ENCODE measurements at regions of chr17 and their contacts with region 1.

Region 1: DNA sequence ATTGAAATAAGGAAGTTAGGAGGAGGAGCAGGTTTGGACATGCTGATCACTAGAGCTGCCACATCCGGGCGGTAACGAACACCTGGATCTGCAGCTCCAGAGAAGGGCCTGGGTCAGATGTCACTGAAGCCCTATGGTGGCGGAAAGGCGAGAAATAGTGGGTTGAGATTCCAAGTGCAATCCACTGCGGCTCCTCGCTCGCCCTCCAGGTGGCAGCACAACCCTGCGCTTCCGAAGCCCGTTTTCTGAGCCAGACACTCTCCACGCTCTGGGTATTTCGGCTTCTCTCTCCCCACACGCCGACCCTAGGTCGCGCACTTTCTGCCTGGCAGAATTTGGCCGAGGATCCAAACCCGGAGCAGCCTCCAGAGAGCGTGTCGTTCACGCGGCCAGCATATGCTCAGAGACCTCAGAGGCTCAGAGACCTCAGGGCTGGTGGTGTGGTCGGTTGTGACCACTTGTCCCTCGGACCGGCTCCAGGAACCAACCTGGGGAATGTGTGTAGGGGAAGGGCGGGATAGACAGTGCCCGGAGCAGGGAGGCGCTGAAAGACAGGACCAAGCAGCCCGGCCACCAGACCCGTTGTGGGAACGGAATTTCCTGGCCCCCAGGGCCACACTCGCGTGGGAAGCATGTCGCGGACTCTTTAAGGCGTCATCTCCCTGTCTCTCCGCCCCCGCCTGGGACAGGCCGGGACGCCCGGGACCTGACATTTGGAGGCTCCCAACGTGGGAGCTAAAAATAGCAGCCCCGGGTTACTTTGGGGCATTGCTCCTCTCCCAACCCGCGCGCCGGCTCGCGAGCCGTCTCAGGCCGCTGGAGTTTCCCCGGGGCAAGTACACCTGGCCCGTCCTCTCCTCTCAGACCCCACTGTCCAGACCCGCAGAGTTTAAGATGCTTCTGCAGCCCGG is 744 bp upstream of the SLC2A4 start:
- H3K4me3 Mint-ChIP-seq: peak overlapping the region; percentile 73
- H3K27ac Mint-ChIP-seq: peak overlapping the region; percentile 46
- H3K4me1 Mint-ChIP-seq: peaks cover 47% of the 10 kb centered on the region
- H3K27me3 Mint-ChIP-seq: peaks cover 76% of the 10 kb centered on the region

Region 2: DNA sequence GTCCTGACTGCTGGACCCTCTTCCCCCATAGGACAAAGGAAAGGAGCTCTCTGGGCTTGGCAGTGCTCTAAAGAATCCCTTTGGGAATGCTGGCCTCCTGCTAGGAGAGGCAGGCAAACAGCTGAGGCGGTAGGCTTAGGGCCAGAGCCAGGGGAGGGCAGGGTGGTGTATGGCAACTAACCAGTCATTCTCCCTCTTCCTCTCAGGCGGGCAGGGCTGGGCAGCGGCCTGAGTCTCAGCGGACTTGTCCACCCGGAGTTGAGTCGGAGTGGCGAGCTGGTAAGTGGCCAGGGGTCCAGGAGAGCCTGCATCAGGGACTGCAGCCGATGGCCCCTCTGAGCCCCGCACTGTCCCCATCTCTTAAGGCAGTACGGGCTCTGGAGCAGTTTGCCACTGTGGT is 56.7 kb before region 1 on chr17:
- intact Hi-C with region 1: no loop called
- H3K4me3 Mint-ChIP-seq: no peak overlapping the region
- H3K27ac Mint-ChIP-seq: no peak overlapping the region
- H3K4me1 Mint-ChIP-seq: peaks cover 30% of the 10 kb centered on the region
- H3K27me3 Mint-ChIP-seq: no peaks in the 10 kb centered on the region

Region 3: DNA sequence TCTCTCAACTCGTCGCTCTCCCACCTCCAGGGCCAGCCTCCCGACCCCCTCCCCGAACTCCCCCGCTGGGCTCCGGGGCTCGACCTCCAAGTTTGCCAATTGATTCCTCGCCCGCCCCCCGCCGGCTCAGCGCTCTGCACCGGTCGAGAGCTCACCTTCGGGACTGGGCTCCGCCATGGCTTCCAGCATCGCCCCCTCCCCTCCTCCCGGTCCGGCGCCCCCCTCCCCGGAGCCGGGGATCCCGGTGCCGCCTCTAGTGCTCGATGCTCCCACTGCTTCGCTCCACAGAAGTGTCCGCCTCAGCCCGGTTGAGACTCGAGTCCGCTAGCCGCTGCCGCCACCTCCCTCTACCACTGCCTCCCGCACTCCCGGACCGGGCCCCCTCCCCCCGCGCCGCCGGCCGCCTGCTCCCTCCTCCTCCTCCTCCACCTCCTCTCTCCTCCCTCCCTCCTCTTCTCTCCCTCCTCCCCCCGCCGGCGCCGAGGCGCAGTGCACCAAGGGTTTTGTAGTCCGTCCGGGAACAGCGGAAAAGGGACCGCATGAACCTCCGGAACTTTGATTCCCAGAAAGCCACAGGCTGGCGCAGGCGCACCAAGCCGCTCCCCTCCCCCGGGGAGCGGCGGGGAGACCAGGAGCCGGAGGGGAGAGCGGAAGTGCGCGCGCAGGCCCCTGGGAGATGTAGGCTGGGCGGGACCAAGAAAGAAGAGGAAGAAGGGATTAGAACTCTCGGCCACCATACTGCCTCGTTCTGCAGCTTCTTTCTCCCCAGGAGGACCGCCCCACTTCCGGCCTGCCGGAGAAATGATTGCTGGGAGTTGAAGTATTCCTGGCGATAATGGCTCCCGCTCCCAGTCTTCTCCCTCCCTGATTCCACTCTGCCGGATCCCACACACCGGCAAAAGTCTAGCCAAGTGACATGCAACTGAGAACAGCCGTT is 41.4 kb before region 1 on chr17 and contains the start of gene PHF23:
- intact Hi-C with region 1: loop called (anchors 5 kb)
- H3K4me3 Mint-ChIP-seq: peak within 1 kb of the TSS; percentile 98
- H3K27ac Mint-ChIP-seq: peak within 1 kb of the TSS; percentile 98
- H3K4me1 Mint-ChIP-seq: peaks cover 63% of the 10 kb centered on the region
- H3K27me3 Mint-ChIP-seq: no peaks in the 10 kb centered on the region

Region 4: GRCh38 chr17:7296189-7296902 is 15.6 kb after region 1 on chr17:
- intact Hi-C with region 1: loop called (anchors 1 kb)
- H3K4me3 Mint-ChIP-seq: peak overlapping the region; percentile 52
- H3K27ac Mint-ChIP-seq: peak overlapping the region; percentile 57
- H3K4me1 Mint-ChIP-seq: peaks cover 30% of the 10 kb centered on the region
- H3K27me3 Mint-ChIP-seq: peaks cover 76% of the 10 kb centered on the region

Region 5: GRCh38 chr17:7329374-7329996 is 48.7 kb after region 1 on chr17:
- intact Hi-C with region 1: loop called (anchors 10 kb)
- H3K4me3 Mint-ChIP-seq: peak overlapping the region; percentile 99
- H3K27ac Mint-ChIP-seq: peak overlapping the region; percentile 98
- H3K4me1 Mint-ChIP-seq: peaks cover 54% of the 10 kb centered on the region
- H3K27me3 Mint-ChIP-seq: no peaks in the 10 kb centered on the region

Measured in dendritic cell treated with granulocyte-macrophage colony-stimulating factor and Interleukin-4, amounts not matched to agents 40 ng/mL and 50 ng/mL, for 4 days (primary cell).